ENCODE measurements at regions of chr11 and their contacts with region 1.

Region 1: GRCh38 chr11:67071420-67072284 is 15.0 kb downstream of the RHOD start:
- DNase-seq: peak; percentile 94
- H3K4me3 Mint-ChIP-seq: peak overlapping the region; percentile 72
- H3K27ac Mint-ChIP-seq: no peak overlapping the region
- H3K4me1 Mint-ChIP-seq: peaks cover 2% of the 10 kb centered on the region
- H3K27me3 Mint-ChIP-seq: peaks cover 10% of the 10 kb centered on the region

Region 2: GRCh38 chr11:67053896-67054842 is 17.5 kb before region 1 on chr11:
- intact Hi-C with region 1: loop called (anchors 1 kb)
- DNase-seq: peak; percentile 83
- H3K4me3 Mint-ChIP-seq: no peak overlapping the region
- H3K27ac Mint-ChIP-seq: no peak overlapping the region
- H3K4me1 Mint-ChIP-seq: peaks cover 8% of the 10 kb centered on the region
- H3K27me3 Mint-ChIP-seq: peaks cover 14% of the 10 kb centered on the region

Measured in activated CD4-positive, alpha-beta T cell treated with anti-CD3 and anti-CD28 coated beads, Interleukin-2, amount 10 ng/mL, durations not matched to agents 24 days and 14 days (primary cell).